Activated CD4-positive, alpha-beta T cell treated with anti-CD3 and anti-CD28 coated beads, Interleukin-2, amount 10 ng/mL, durations not matched to agents 7 days and 5 days (primary cell): ENCODE measurements at regions of chr1 and their contacts with region 1.

Region 1: GRCh38 chr1:70205434-70206118 is at the start of gene LRRC40:
- DNase-seq: peak; percentile 96
- H3K4me3 Mint-ChIP-seq: peak within 1 kb of the TSS; percentile 100
- H3K27ac Mint-ChIP-seq: peak within 1 kb of the TSS; percentile 100
- H3K4me1 Mint-ChIP-seq: peaks cover 71% of the 10 kb centered on the region
- H3K27me3 Mint-ChIP-seq: no peaks in the 10 kb centered on the region
- total RNA-seq, gene LRRC40: 19.4 to 24.7 TPM

Region 2: DNA sequence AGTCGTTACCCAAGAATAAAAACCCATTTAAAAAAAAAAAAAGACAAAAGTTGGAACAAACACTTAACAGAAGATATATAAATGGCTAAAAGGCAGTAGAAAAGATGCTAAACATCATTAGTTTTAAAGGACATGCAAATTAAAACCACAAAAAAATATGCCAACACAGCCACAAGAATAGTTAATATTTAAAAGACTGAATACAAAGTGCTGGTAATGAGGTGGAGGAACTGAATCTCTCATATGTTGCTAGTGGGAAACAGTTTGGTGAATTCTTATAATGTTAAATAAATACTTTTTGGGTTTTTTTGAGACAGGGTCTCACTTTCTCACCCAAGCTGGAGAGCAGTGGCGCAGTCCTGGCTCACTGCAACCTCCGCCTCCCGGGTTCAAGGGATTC is 10.2 kb before region 1 on chr1:
- CTCF ChIA-PET with region 1: no interaction called
- POLR2A ChIA-PET with region 1: no interaction called
- DNase-seq: no peak
- H3K4me3 Mint-ChIP-seq: no peak overlapping the region
- H3K27ac Mint-ChIP-seq: no peak overlapping the region
- H3K4me1 Mint-ChIP-seq: peaks cover 2% of the 10 kb centered on the region
- H3K27me3 Mint-ChIP-seq: no peaks in the 10 kb centered on the region

Region 3: DNA sequence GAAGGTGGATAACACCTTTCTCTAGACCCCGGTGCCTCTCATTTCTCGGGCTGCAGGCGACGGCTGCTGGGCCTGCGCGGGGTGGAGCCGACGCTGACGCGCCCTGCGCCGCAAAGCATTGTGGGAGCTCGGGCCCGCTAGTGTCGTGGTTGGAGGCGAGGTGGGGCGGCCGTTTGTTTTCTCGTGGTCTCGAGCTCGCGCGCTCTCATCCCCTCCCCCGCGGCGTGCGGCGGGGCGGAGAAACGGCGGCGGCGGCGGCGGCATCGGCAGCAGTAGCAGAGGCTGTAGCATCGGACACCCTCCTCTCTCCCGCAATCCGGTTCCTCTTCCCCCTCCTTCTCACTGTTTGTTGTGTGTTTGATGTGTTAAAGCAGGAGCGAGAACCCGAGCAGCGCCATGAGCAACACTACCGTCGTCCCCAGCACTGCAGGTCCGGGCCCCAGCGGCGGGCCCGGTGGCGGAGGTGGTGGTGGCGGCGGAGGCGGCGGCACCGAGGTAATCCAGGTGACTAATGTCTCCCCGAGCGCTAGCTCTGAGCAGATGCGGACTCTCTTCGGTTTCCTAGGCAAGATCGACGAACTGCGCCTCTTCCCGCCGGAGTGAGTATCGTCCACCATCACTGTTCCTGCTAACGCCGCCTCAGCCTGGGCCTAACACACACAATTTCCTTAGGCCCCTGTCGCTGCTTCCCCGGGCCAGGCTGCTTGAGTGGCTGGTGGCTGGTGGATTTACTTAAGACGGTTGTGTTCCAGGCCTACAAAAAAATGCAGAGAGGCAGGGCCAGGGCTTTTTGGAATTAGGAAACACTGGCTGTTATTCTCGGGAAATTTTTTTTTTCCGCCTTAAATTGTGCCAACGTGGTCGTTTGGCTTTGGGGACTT is 15.9 kb after region 1 on chr1 and contains the start of gene SRSF11:
- CTCF ChIA-PET with region 1: interaction called, 11 read pairs
- POLR2A ChIA-PET with region 1: interaction called, 5 read pairs
- DNase-seq: peak; percentile 96
- H3K4me3 Mint-ChIP-seq: peak within 1 kb of the TSS; percentile 85
- H3K27ac Mint-ChIP-seq: peak within 1 kb of the TSS; percentile 97
- H3K4me1 Mint-ChIP-seq: peaks cover 48% of the 10 kb centered on the region
- H3K27me3 Mint-ChIP-seq: no peaks in the 10 kb centered on the region
- total RNA-seq, gene SRSF11: 188 to 204 TPM